ENCODE measurements at regions of chr12 and their contacts with region 1.

Region 1: DNA sequence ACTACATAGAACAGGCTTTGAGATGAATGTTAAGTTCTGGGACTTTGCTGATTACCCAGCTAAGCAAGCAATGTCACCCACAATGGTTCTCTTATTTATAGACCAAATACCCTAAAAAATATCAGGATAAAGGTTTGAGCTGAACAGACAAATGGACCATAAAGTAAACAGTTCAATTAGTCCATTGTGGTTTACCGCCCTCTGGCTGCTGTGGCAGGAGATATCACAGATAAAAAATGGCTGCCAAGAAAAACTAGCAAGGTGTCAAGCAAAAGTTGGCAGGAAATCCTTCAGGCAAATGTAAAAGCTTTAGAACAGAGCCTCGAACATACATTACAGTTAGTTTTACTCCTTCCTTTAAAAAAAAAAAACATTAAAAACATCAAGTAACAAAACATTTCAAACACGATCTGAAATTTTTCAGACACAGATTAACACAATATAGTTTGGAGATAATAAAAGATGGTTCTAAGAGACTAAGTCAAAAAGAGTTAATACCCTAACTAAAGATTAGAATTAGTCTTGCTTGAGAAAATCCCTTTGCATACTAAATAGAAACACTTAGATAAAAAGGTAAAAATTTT is 41.3 kb downstream of the MED13L start:
- DNase-seq: peak in 1 of 2 donors; percentile 57
- ATAC-seq: peak in 3 of 4 donors; percentile 57 to 79 (median 76)
- H3K4me3 ChIP-seq: no peak overlapping the region
- H3K27ac ChIP-seq: no peak overlapping the region
- H3K4me1 ChIP-seq: peaks cover 53% of the 10 kb centered on the region
- H3K27me3 ChIP-seq: no peaks in the 10 kb centered on the region
- CTCF ChIP-seq: peak; percentile 67

Region 2: GRCh38 chr12:115998119-115998633 is 238.1 kb before region 1 on chr12:
- intact Hi-C with region 1: loop called in 1 of 2 experiments (anchors 5 kb)
- DNase-seq: no peak
- ATAC-seq: peak; percentile 55 to 74 (median 60)
- H3K4me3 ChIP-seq: no peak overlapping the region
- H3K27ac ChIP-seq: peak overlapping the region; percentile 5
- H3K4me1 ChIP-seq: peaks cover 30% of the 10 kb centered on the region
- H3K27me3 ChIP-seq: no peaks in the 10 kb centered on the region
- CTCF ChIP-seq: peak; percentile 85

Region 3: GRCh38 chr12:116015525-116015924 is 220.7 kb before region 1 on chr12:
- intact Hi-C with region 1: loop called (anchors 5 kb)
- DNase-seq: no peak
- ATAC-seq: peak; percentile 66 to 83 (median 78)
- H3K4me3 ChIP-seq: no peak overlapping the region
- H3K27ac ChIP-seq: peak overlapping the region; percentile 7
- H3K4me1 ChIP-seq: peaks cover 38% of the 10 kb centered on the region
- H3K27me3 ChIP-seq: no peaks in the 10 kb centered on the region
- CTCF ChIP-seq: peak; percentile 56

Region 4: DNA sequence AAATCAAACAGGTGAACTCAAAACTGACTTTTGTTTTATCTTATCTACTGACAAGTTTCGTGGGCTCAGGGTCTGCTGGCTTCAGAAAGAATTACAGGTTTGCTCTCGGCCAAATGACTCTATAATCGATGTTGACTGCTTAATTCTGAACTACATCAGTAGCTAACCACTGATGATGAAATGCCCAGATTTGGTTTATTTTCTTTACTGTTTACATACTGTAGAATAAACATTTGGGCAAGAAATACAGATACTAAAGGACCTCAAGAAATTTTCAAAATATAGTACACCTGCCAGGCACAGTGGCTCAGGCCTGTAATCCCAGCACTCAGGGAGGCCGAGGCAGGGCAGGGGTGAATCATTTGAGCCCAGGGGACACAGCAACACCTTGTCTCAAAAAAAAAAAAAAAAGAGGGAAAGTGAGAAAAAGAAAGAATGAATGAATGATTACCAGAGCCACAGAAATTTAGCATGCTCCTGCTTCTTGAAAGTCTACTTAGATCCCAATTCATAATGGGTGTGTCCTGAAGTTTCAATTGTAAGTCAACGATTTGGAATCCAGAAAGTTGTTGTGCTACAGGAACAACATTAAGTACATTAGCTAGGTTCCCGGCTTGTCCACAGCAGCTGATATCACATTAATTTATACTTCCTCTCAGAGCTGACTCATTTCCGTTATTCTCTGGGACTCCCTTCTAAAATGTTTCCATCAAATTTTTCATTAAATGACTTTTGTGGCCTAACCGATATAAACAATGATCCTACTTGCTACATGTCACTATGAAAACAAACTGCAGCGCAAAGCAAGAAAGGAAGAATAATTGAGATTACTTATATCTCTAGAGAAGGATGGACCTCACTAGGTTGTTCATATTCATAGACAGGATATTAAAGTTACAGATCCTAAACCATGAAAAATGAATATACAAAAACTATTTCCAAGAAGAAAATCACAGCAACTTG is 93.0 kb before region 1 on chr12:
- intact Hi-C with region 1: loop called (anchors 5 kb)
- DNase-seq: no peak
- ATAC-seq: no peak
- H3K4me3 ChIP-seq: peak overlapping the region; percentile 0
- H3K27ac ChIP-seq: peak overlapping the region; percentile 75
- H3K4me1 ChIP-seq: peaks cover 60% of the 10 kb centered on the region
- H3K27me3 ChIP-seq: no peaks in the 10 kb centered on the region
- CTCF ChIP-seq: no peak

Region 5: GRCh38 chr12:116183741-116184141 is 52.5 kb before region 1 on chr12:
- intact Hi-C with region 1: no loop called
- DNase-seq: no peak
- ATAC-seq: no peak
- H3K4me3 ChIP-seq: no peak overlapping the region
- H3K27ac ChIP-seq: no peak overlapping the region
- H3K4me1 ChIP-seq: peaks cover 73% of the 10 kb centered on the region
- H3K27me3 ChIP-seq: no peaks in the 10 kb centered on the region
- CTCF ChIP-seq: no peak

Region 6: DNA sequence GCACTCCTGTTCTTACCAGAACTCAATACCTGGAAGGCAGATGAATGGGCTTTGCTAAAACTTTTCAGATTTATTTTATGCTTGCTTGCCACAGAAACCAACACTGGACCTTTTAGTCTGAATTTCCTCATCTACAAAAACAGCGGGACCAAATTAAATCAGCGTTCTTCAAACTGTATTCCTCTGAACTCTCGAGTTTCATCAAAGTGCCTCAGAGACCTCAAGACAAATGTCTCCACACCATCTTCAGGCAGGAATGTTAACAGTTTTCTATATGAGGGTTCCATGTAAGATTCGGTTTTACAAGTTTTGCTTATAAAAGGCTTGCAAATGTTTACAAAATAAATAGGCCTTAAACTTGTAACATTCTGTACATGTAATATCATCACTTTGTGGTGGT is 33.3 kb before region 1 on chr12:
- intact Hi-C with region 1: no loop called
- DNase-seq: no peak
- ATAC-seq: peak in 1 of 4 donors; percentile 42
- H3K4me3 ChIP-seq: no peak overlapping the region
- H3K27ac ChIP-seq: peak overlapping the region; percentile 5
- H3K4me1 ChIP-seq: peaks cover 67% of the 10 kb centered on the region
- H3K27me3 ChIP-seq: no peaks in the 10 kb centered on the region
- CTCF ChIP-seq: peak; percentile 19

Region 7: GRCh38 chr12:116282371-116283286 is 46.4 kb after region 1 on chr12:
- intact Hi-C with region 1: no loop called
- DNase-seq: no peak
- ATAC-seq: no peak
- H3K4me3 ChIP-seq: peak overlapping the region; percentile 27
- H3K27ac ChIP-seq: no peak overlapping the region
- H3K4me1 ChIP-seq: no peaks in the 10 kb centered on the region
- H3K27me3 ChIP-seq: no peaks in the 10 kb centered on the region
- CTCF ChIP-seq: no peak